ENCODE measurements at regions of chr5 and their contacts with region 1.

Region 1: GRCh38 chr5:43305948-43306565 is 7.2 kb downstream of the HMGCS1 start:
- DNase-seq: no peak
- ATAC-seq: peak; percentile 31
- H3K4me3 Mint-ChIP-seq: no peak overlapping the region
- H3K27ac Mint-ChIP-seq: peak overlapping the region; percentile 81
- H3K4me1 Mint-ChIP-seq: peaks cover 72% of the 10 kb centered on the region
- H3K27me3 Mint-ChIP-seq: no peaks in the 10 kb centered on the region

Region 2: GRCh38 chr5:43231977-43232376 is 74.1 kb before region 1 on chr5:
- CTCF ChIA-PET with region 1: interaction called, 14 read pairs
- DNase-seq: no peak
- ATAC-seq: peak; percentile 9
- H3K4me3 Mint-ChIP-seq: no peak overlapping the region
- H3K27ac Mint-ChIP-seq: no peak overlapping the region
- H3K4me1 Mint-ChIP-seq: peaks cover 5% of the 10 kb centered on the region
- H3K27me3 Mint-ChIP-seq: no peaks in the 10 kb centered on the region

Measured in activated CD8-positive, alpha-beta memory T cell treated with anti-CD3 and anti-CD28 coated beads, Interleukin-2, amount 10 ng/mL, durations not matched to agents 7 days and 5 days (primary cell).